ENCODE measurements at regions of chr10 and their contacts with region 1.

Region 1: DNA sequence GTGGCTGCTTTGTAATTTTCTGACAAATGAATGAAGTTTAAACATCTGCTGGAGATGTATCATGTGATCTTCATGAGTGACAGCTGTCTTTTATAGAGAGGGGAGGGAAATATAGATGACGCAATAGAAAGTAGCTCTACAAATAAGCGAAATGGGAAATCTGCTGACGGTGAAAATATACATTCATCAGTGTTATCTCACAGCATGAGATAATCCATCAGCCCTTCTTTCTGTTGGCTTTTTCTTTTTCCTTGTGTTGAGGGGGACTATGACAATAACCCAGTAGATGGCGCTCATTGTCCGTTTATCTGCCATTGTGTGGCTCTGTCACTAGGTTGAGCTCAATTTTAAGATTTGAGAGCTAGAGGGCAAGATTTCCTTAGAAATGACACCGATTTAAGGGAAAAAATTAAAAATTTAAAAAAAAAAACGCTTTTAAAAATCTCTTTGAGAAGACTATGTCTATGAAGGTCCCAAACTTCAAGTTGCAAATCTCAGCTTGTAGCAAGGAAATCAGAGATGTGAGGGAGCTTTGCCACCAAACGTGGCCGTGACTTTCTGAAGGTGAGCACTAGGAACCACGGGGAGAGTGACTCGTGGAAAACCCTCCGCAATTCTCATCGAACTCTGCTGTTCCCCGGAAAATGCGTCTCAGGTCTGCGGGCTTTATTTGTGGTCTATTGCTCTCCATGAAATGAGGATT is 114.6 kb upstream of the SFMBT2 start:
- DNase-seq: peak in 13 of 14 experiments; percentile 31 to 86 (median 48)
- ATAC-seq: peak; percentile 91
- H3K4me3 ChIP-seq: no peak overlapping the region
- H3K4me3 Mint-ChIP-seq: no peak overlapping the region
- H3K27ac ChIP-seq: no peak overlapping the region
- H3K27ac Mint-ChIP-seq: no peak overlapping the region
- H3K4me1 ChIP-seq: peaks cover 4% of the 10 kb centered on the region
- H3K4me1 Mint-ChIP-seq: peaks cover 29% of the 10 kb centered on the region
- H3K27me3 ChIP-seq: no peaks in the 10 kb centered on the region
- H3K27me3 Mint-ChIP-seq: no peaks in the 10 kb centered on the region
- CTCF ChIP-seq: peak; percentile 76

Region 2: DNA sequence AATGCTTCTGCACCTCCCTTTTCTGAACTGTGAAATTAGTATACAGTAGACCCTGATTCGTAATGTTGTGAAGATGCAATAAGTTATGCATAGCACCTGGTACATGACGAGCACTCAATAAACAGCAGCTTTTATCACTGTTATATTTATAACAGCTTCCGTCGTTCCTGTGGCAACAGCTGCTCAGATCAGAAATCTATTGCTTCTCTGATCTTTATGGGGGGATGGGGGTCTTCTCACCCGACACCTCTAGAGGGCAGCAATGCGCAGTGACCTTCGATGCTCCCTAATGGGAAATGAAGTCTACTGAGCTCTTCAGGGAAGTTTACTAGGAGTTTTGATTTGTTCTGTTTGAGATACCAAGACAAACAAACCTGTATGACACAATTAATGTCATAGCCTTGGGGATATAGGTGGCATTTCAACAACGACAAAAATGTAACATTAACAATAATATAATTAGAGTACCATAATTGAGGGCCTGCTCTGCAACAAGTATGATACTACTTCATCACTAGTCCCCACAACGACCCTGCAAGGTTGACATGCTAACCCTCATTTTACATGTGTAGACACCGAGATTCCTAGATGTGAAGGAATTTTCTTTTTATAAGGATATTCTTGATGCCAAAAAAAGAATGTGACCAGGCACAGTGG is 404.2 kb before region 1 on chr10:
- CTCF ChIA-PET with region 1: no interaction called
- POLR2A ChIA-PET with region 1: no interaction called
- intact Hi-C with region 1: loop called in 1 of 2 experiments (anchors 10 kb)
- DNase-seq: peak; percentile 48 to 84 (median 61)
- ATAC-seq: peak; percentile 94
- H3K4me3 ChIP-seq: no peak overlapping the region
- H3K4me3 Mint-ChIP-seq: no peak overlapping the region
- H3K27ac ChIP-seq: no peak overlapping the region
- H3K27ac Mint-ChIP-seq: peak overlapping the region; percentile 65
- H3K4me1 ChIP-seq: peaks cover 7% of the 10 kb centered on the region
- H3K4me1 Mint-ChIP-seq: peaks cover 8% of the 10 kb centered on the region
- H3K27me3 ChIP-seq: no peaks in the 10 kb centered on the region
- H3K27me3 Mint-ChIP-seq: no peaks in the 10 kb centered on the region
- CTCF ChIP-seq: peak; percentile 82

Region 3: GRCh38 chr10:7687228-7687907 is 161.9 kb after region 1 on chr10:
- CTCF ChIA-PET with region 1: interaction called, 34 read pairs
- POLR2A ChIA-PET with region 1: interaction called, 8 read pairs
- intact Hi-C with region 1: loop called (anchors 1 kb)
- DNase-seq: peak; percentile 57 to 90 (median 66)
- ATAC-seq: peak; percentile 99
- H3K4me3 ChIP-seq: no peak overlapping the region
- H3K4me3 Mint-ChIP-seq: no peak overlapping the region
- H3K27ac ChIP-seq: no peak overlapping the region
- H3K27ac Mint-ChIP-seq: no peak overlapping the region
- H3K4me1 ChIP-seq: no peaks in the 10 kb centered on the region
- H3K4me1 Mint-ChIP-seq: peaks cover 5% of the 10 kb centered on the region
- H3K27me3 ChIP-seq: no peaks in the 10 kb centered on the region
- H3K27me3 Mint-ChIP-seq: peaks cover 7% of the 10 kb centered on the region
- CTCF ChIP-seq: peak; percentile 89

Region 4: DNA sequence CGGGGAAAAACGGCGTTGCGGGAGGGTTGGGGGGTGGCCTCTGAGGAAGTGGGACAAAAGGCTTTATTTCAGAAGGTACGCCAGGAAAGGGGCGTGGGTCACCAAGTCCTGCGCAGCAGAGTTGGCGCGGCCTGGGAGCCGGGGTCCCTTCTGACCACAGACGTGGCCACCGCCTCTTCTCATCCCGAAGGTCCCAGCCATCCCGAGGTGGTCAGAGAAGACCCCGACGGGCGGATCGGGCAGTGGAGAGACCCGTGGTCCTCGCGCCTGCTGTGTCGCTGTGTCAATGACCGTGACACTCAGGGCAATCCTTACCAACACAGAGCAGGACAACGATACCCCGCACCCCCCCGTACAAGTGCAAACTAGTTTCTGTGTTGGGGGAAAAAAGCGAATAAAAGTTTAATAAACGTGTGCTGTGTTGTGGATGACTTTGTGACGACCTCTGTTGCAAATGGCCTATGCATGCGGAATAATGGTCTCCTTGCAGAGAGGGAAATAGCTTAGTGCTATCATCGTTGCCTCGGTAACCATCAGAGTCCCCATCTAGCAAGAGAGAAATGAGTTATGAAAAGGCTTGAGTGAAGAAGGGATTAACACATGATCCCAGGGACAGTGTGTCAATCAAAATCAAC is 509.7 kb after region 1 on chr10:
- CTCF ChIA-PET with region 1: no interaction called
- POLR2A ChIA-PET with region 1: no interaction called
- intact Hi-C with region 1: loop called in 1 of 2 experiments (anchors 10 kb)
- DNase-seq: peak in 2 of 14 experiments; percentile 42 to 50
- ATAC-seq: peak; percentile 41
- H3K4me3 ChIP-seq: no peak overlapping the region
- H3K4me3 Mint-ChIP-seq: peak overlapping the region; percentile 47
- H3K27ac ChIP-seq: no peak overlapping the region
- H3K27ac Mint-ChIP-seq: peak overlapping the region; percentile 60
- H3K4me1 ChIP-seq: peaks cover 46% of the 10 kb centered on the region
- H3K4me1 Mint-ChIP-seq: peaks cover 30% of the 10 kb centered on the region
- H3K27me3 ChIP-seq: peaks cover 76 to 77% of the 10 kb centered on the region in 2 experiments
- H3K27me3 Mint-ChIP-seq: peaks cover 88% of the 10 kb centered on the region
- CTCF ChIP-seq: no peak

Region 5: DNA sequence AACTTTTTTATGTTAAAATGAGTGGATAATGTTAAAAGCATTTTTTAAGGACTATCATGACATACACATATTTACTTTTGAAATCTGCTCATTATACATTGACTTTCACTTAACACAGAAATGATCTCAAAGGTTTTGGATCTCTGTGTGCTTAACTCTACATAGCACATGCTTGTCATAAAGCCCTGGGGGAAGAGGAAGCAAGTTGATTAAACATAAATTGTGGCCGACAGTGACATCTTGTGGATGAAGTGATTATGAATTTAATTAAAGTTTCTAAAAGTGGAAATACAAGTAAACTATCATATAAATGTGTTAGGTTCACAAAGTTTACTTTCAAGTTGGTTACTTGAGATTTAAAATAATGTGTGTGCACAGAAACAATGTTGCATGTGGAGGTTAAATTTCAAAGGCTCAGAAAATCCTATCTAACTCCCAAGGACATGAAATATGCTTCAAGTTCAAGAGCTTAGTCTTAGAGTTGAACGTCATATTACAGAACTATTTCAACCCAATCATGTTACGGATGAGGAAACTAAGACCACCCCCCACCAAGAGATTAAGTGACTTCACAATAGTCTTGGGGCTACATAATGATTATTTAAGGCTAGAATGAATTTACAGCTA is 1776.8 kb after region 1 on chr10:
- CTCF ChIA-PET with region 1: interaction called, 5 read pairs
- POLR2A ChIA-PET with region 1: no interaction called
- intact Hi-C with region 1: loop called (anchors 1 kb)
- DNase-seq: peak in 4 of 14 experiments; percentile 25 to 70 (median 64)
- ATAC-seq: peak; percentile 49
- H3K4me3 ChIP-seq: no peak overlapping the region
- H3K4me3 Mint-ChIP-seq: no peak overlapping the region
- H3K27ac ChIP-seq: no peak overlapping the region
- H3K27ac Mint-ChIP-seq: no peak overlapping the region
- H3K4me1 ChIP-seq: no peaks in the 10 kb centered on the region
- H3K4me1 Mint-ChIP-seq: no peaks in the 10 kb centered on the region
- H3K27me3 ChIP-seq: no peaks in the 10 kb centered on the region
- H3K27me3 Mint-ChIP-seq: peaks cover 19% of the 10 kb centered on the region
- CTCF ChIP-seq: peak; percentile 64